IMR-90 (cell line): ENCODE measurements at regions of chr6 and their contacts with region 1.

Region 1: DNA sequence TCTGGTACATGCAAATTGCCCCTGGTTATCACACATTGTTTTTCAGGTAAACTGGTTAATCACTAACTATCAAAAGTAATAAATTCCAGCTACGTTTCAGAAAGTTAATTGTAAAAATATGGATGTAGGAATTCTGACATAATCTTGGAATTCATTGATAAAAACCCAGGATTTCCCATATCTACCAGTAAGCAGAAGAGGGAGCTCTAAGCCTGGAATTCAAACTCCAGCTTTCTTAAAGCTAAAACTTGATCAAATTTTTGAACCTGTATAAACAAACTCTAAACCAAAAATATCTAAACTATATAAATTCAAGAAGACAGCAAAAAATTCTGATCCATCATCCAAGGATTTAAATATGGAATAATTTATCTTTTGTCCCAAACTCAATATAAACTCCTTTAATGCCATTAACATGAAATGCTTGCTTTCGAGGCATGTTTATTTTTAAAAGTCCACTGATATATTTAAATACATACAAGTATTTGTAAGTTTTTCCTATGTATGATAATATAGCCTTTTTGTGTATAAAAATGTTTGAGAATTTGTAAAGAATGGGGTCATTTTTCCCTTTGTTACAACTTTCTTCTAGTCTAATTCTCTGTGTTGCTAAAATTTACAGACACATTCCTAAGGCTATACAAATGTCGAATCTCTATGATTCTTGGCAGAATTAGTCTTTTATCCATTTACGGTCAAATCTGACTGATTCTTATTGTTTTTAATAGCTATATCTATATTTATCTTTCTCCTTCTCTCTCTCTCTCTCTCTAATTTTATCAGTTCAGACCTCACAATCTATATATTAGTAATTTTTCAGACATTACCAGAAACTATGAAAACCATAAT is 91.4 kb upstream of the RNF217 start:
- DNase-seq: peak; percentile 64
- ATAC-seq: peak; percentile 67
- H3K4me3 ChIP-seq: no peak overlapping the region
- H3K27ac ChIP-seq: no peak overlapping the region
- H3K4me1 ChIP-seq: peaks cover 2% of the 10 kb centered on the region; the same call in 1 of the 2 replicates
- H3K27me3 ChIP-seq: no peaks in the 10 kb centered on the region
- CTCF ChIP-seq: peak; percentile 83
- POLR2A ChIP-seq: no peak
- RAD21 ChIP-seq: peak; percentile 86

Region 2: GRCh38 chr6:125114248-125114858 is 243.5 kb after region 1 on chr6:
- CTCF ChIA-PET with region 1: interaction called, 14 read pairs
- POLR2A ChIA-PET with region 1: no interaction called
- dilution Hi-C with region 1: no loop called
- in situ Hi-C with region 1: loop called (anchors 5 kb)
- intact Hi-C with region 1: loop called (anchors 1 kb)
- DNase-seq: peak; percentile 61
- ATAC-seq: peak; percentile 51; the same call in 1 of the 2 replicates
- H3K4me3 ChIP-seq: no peak overlapping the region
- H3K27ac ChIP-seq: no peak overlapping the region
- H3K4me1 ChIP-seq: no peaks in the 10 kb centered on the region
- H3K27me3 ChIP-seq: no peaks in the 10 kb centered on the region
- CTCF ChIP-seq: peak; percentile 89
- POLR2A ChIP-seq: no peak
- RAD21 ChIP-seq: peak; percentile 88

Region 3: GRCh38 chr6:125273965-125274364 is 403.1 kb after region 1 on chr6:
- CTCF ChIA-PET with region 1: no interaction called
- POLR2A ChIA-PET with region 1: no interaction called
- dilution Hi-C with region 1: no loop called
- in situ Hi-C with region 1: loop called (anchors 10 kb)
- intact Hi-C with region 1: no loop called
- DNase-seq: peak; percentile 24
- ATAC-seq: no peak
- H3K4me3 ChIP-seq: no peak overlapping the region
- H3K27ac ChIP-seq: no peak overlapping the region
- H3K4me1 ChIP-seq: no peaks in the 10 kb centered on the region
- H3K27me3 ChIP-seq: no peaks in the 10 kb centered on the region
- CTCF ChIP-seq: no peak
- POLR2A ChIP-seq: no peak
- RAD21 ChIP-seq: no peak

Region 4: GRCh38 chr6:125765944-125766343 is 895.1 kb after region 1 on chr6:
- CTCF ChIA-PET with region 1: no interaction called
- POLR2A ChIA-PET with region 1: no interaction called
- dilution Hi-C with region 1: no loop called
- in situ Hi-C with region 1: loop called (anchors 5 kb)
- intact Hi-C with region 1: loop called (anchors 5 kb)
- DNase-seq: no peak
- ATAC-seq: no peak
- H3K4me3 ChIP-seq: no peak overlapping the region
- H3K27ac ChIP-seq: no peak overlapping the region
- H3K4me1 ChIP-seq: no peaks in the 10 kb centered on the region
- H3K27me3 ChIP-seq: peaks cover 17% of the 10 kb centered on the region
- CTCF ChIP-seq: no peak
- POLR2A ChIP-seq: no peak
- RAD21 ChIP-seq: no peak